ENCODE measurements at regions of chr1 and their contacts with region 1.

Region 1: GRCh38 chr1:98940722-98941079 is 64.0 kb downstream of the PLPPR5 start:
- DNase-seq: no peak
- ATAC-seq: no peak
- H3K4me3 ChIP-seq: no peak overlapping the region
- H3K4me3 Mint-ChIP-seq: no peak overlapping the region
- H3K27ac ChIP-seq: no peak overlapping the region
- H3K27ac Mint-ChIP-seq: no peak overlapping the region
- H3K4me1 ChIP-seq: no peaks in the 10 kb centered on the region
- H3K4me1 Mint-ChIP-seq: no peaks in the 10 kb centered on the region
- H3K27me3 ChIP-seq: no peaks in the 10 kb centered on the region
- H3K27me3 Mint-ChIP-seq: no peaks in the 10 kb centered on the region
- CTCF ChIP-seq: no peak

Region 2: GRCh38 chr1:98910827-98911226 is 29.9 kb before region 1 on chr1:
- CTCF ChIA-PET with region 1: no interaction called
- POLR2A ChIA-PET with region 1: no interaction called
- intact Hi-C with region 1: no loop called
- DNase-seq: no peak
- ATAC-seq: no peak
- H3K4me3 ChIP-seq: no peak overlapping the region
- H3K4me3 Mint-ChIP-seq: no peak overlapping the region
- H3K27ac ChIP-seq: no peak overlapping the region
- H3K27ac Mint-ChIP-seq: no peak overlapping the region
- H3K4me1 ChIP-seq: no peaks in the 10 kb centered on the region
- H3K4me1 Mint-ChIP-seq: no peaks in the 10 kb centered on the region
- H3K27me3 ChIP-seq: no peaks in the 10 kb centered on the region
- H3K27me3 Mint-ChIP-seq: no peaks in the 10 kb centered on the region
- CTCF ChIP-seq: no peak

Region 3: DNA sequence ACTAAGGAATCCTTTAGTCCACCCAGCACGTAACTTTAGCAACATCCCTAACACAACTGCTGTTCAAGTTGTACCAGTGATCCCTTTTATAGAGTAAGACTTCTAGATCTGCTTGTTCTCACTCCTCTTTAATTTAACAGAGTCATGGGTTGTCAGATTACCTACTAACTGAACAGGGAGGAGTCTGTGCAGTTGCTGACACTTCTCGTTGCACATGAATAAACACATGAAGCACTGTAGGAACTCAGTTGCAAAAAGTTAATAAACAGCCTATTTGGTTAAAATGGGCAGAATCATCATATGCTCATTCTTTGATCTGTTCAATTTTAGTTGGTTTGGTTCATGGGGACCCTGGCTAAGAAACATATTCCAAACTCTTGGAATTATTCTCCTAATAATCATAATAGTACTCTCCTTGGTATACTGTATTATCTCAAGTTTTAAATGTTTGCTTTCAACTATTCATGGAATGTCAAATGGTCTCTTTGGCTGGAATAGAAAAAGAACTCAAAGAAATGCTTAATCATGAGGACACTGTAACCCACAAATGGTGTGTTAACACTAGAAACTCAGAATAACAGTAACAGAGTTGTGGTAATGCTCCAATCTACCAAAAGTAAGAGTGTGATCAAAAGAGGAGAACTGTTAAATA is 48.3 kb after region 1 on chr1:
- CTCF ChIA-PET with region 1: no interaction called
- POLR2A ChIA-PET with region 1: no interaction called
- intact Hi-C with region 1: loop called in 1 of 2 experiments (anchors 5 kb)
- DNase-seq: no peak
- ATAC-seq: no peak
- H3K4me3 ChIP-seq: no peak overlapping the region
- H3K4me3 Mint-ChIP-seq: no peak overlapping the region
- H3K27ac ChIP-seq: no peak overlapping the region
- H3K27ac Mint-ChIP-seq: no peak overlapping the region
- H3K4me1 ChIP-seq: peaks cover 3% of the 10 kb centered on the region
- H3K4me1 Mint-ChIP-seq: peaks cover 7% of the 10 kb centered on the region
- H3K27me3 ChIP-seq: no peaks in the 10 kb centered on the region
- H3K27me3 Mint-ChIP-seq: no peaks in the 10 kb centered on the region
- CTCF ChIP-seq: no peak

Region 4: GRCh38 chr1:99004860-99005442 is 64.2 kb after region 1 on chr1 and contains the start of gene PLPPR5:
- CTCF ChIA-PET with region 1: no interaction called
- POLR2A ChIA-PET with region 1: no interaction called
- intact Hi-C with region 1: no loop called
- DNase-seq: peak in 7 of 14 experiments; percentile 2 to 35 (median 24)
- ATAC-seq: peak; percentile 17
- H3K4me3 ChIP-seq: peak within 1 kb of the TSS; percentile 41
- H3K4me3 Mint-ChIP-seq: peak within 1 kb of the TSS; percentile 76
- H3K27ac ChIP-seq: no peak within 1 kb of the TSS
- H3K27ac Mint-ChIP-seq: no peak within 1 kb of the TSS
- H3K4me1 ChIP-seq: peaks cover 13% of the 10 kb centered on the region
- H3K4me1 Mint-ChIP-seq: peaks cover 11% of the 10 kb centered on the region
- H3K27me3 ChIP-seq: peaks cover 37 to 45% of the 10 kb centered on the region in 2 experiments
- H3K27me3 Mint-ChIP-seq: peaks cover 81% of the 10 kb centered on the region
- CTCF ChIP-seq: no peak
- total RNA-seq, gene PLPPR5: not detected